ENCODE measurements at regions of chr1 and their contacts with region 1.

Region 1: DNA sequence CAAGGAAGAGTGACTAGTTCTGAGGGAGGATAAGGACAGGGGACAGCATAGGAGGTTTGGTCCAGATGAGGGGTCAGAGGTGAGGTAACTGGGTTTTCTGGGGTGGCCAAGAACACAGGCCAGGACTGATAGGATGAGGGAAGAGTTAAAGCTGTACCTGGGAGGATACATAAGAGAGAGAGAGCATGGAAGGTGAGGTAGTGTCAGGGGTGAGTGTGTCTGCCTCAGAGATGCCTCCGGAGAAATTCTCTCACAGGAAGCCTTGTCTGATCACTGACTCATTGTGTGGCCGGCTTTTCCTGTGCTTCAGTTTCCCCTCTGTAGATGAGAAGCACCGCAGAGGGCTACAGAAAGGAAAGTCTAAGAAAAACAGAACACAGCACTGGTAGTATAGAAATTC is 40.2 kb downstream of the FASLG start:
- DNase-seq: peak; percentile 52
- ATAC-seq: peak; percentile 85
- H3K4me3 Mint-ChIP-seq: peak overlapping the region; percentile 72
- H3K27ac Mint-ChIP-seq: peak overlapping the region; percentile 89
- H3K4me1 Mint-ChIP-seq: peaks cover 48% of the 10 kb centered on the region
- H3K27me3 Mint-ChIP-seq: no peaks in the 10 kb centered on the region

Region 2: DNA sequence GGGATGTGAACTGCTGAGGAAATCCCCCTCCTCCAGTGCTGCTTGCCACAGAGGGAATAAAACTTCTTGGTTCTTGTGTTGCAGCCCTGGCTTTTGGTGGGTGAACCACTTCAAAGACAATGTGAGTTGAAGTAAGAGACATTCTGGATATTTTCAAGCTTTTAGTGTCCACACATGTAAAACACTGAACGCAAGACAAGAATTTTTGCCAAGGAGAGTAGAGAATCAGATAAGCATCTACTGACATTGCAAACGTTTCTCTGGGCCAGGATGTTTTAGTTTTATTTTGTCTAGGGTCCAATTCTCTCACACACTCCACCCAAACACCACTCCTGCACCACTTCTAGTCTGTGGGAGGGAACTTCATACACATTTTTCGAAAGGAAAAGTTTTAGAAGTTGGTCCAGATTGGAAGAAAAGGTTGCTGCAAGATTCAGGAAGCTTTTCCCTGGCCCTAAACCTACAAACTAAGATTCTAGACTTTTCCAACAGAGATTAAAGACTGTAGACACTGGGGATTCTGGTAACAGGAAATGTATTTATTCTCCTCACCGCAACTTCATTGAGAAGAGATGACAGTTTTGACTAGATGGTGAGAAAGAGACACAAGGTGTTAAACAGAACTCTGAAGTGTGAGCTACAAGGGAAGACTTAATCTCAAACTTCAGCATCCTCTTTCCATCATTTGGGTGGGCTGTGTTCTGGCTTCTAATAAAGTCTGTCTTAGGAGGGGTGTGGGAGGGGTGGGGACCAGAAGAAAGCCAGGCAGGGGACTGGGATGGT is 24.1 kb before region 1 on chr1:
- POLR2A ChIA-PET with region 1: interaction called, 11 read pairs
- DNase-seq: no peak
- ATAC-seq: peak; percentile 57
- H3K4me3 Mint-ChIP-seq: peak overlapping the region; percentile 44
- H3K27ac Mint-ChIP-seq: peak overlapping the region; percentile 77
- H3K4me1 Mint-ChIP-seq: peaks cover 60% of the 10 kb centered on the region
- H3K27me3 Mint-ChIP-seq: peaks cover 5% of the 10 kb centered on the region

Region 3: DNA sequence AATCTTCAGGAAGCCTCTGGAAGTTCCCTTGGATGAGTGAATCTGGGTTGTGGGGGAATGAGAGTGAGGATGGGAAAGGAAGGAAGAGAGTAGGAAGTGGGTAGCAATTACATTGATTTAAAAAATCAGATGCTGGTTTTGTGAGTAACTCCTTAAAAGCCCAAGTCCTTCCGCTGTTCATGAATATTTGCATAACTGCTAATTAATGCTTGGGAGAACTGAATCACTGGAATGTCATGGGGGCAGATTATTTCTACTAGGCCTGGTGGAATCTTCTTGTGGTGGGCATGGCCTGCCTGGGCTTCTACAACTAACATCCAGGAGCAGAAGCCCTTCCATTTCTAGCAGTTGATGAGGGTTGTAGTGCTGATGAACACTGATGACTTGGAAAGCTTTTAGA is 12.4 kb after region 1 on chr1:
- POLR2A ChIA-PET with region 1: no interaction called
- DNase-seq: no peak
- ATAC-seq: no peak
- H3K4me3 Mint-ChIP-seq: no peak overlapping the region
- H3K27ac Mint-ChIP-seq: no peak overlapping the region
- H3K4me1 Mint-ChIP-seq: peaks cover 45% of the 10 kb centered on the region
- H3K27me3 Mint-ChIP-seq: peaks cover 14% of the 10 kb centered on the region